ENCODE measurements at regions of chr14 and their contacts with region 1.

Region 1: GRCh38 chr14:51860164-51860824 is at the start of gene GNG2:
- DNase-seq: peak; percentile 91
- H3K4me3 ChIP-seq: peak within 1 kb of the TSS; percentile 39 to 52 (median 44)
- H3K27ac ChIP-seq: peak within 1 kb of the TSS; percentile 32 to 71 (median 62)
- H3K4me1 ChIP-seq: peaks cover 0 to 25% (median 10%) of the 10 kb centered on the region in 4 donors
- H3K27me3 ChIP-seq: no peaks in the 10 kb centered on the region
- CTCF ChIP-seq: no peak
- EP300 ChIP-seq: no peak
- POLR2A ChIP-seq: peak; percentile 47 to 51
- total RNA-seq, gene GNG2: 27.3 to 44.2 (median 29.1) TPM

Region 2: DNA sequence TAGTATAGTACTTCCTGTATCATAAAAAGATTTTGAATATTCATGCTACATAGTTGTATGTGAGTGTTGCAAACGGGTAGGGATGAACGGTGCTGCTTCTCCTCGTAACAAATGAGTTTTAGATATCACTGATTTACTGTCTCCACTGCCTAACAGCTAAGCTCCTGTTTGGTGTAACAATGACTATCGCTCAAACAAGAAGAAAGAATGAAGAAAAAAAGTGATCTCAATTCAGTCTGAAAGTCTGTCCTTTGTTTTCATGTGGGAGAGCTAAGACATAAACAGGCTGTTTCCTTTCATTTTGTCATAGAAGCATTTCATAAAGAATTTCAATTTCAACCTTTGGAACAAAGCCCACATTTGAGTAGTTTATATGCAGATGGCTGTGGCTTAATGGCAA is 103.0 kb after region 1 on chr14:
- intact Hi-C with region 1: loop called (anchors 5 kb)
- DNase-seq: no peak
- H3K4me3 ChIP-seq: peak overlapping the region in 3 of 4 donors; percentile 3 to 20 (median 16)
- H3K27ac ChIP-seq: peak overlapping the region in 3 of 4 donors; percentile 12 to 47 (median 35)
- H3K4me1 ChIP-seq: peaks cover 0 to 19% (median 3%) of the 10 kb centered on the region in 4 donors
- H3K27me3 ChIP-seq: no peaks in the 10 kb centered on the region
- CTCF ChIP-seq: no peak
- EP300 ChIP-seq: no peak
- POLR2A ChIP-seq: no peak